SK-N-SH (cell line): ENCODE measurements at regions of chr5 and their contacts with region 1.

Region 1: DNA sequence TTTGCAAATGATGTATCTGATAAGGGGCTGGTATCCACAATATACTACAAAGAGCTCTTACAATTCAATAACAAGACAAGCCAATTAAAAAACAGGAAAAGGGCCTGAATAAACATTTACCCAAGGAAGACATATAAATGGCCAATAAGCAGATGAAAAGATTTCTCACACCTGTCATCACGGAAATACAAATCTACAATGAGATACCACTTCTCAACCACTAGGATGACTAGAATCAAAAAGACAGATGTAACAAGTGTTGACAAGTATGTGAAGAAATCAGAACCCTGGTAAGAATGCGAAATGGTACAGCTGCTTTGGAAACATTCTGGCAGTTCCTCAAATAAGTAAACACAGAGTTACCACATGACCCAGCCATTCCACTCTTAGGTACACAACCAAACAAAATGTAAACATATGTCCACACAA is 32.4 kb downstream of the LEAP2 start:
- DNase-seq: no peak
- H3K4me3 ChIP-seq: no peak overlapping the region
- H3K27ac ChIP-seq: no peak overlapping the region
- H3K4me1 ChIP-seq: no peaks in the 10 kb centered on the region; a peak in 1 of 4 replicates
- H3K27me3 ChIP-seq: no peaks in the 10 kb centered on the region
- CTCF ChIP-seq: no peak
- EP300 ChIP-seq: no peak
- RAD21 ChIP-seq: no peak

Region 2: GRCh38 chr5:132890817-132891216 is 15.1 kb before region 1 on chr5:
- CTCF ChIA-PET with region 1: interaction called, 11 read pairs
- POLR2A ChIA-PET with region 1: no interaction called
- DNase-seq: no peak
- H3K4me3 ChIP-seq: no peak overlapping the region
- H3K27ac ChIP-seq: no peak overlapping the region
- H3K4me1 ChIP-seq: no peaks in the 10 kb centered on the region
- H3K27me3 ChIP-seq: no peaks in the 10 kb centered on the region
- CTCF ChIP-seq: no peak
- EP300 ChIP-seq: no peak
- RAD21 ChIP-seq: no peak